ENCODE measurements at regions of chr2 and their contacts with region 1.

Region 1: GRCh38 chr2:176079831-176080539 is 3.8 kb downstream of the EVX2 start:
- DNase-seq: no peak
- H3K4me3 ChIP-seq: peak overlapping the region; percentile 12 to 33
- H3K27ac ChIP-seq: peak overlapping the region; percentile 77 to 82
- H3K4me1 ChIP-seq: no peaks in the 10 kb centered on the region
- H3K27me3 ChIP-seq: peaks cover 28% of the 10 kb centered on the region
- CTCF ChIP-seq: peak; percentile 64 to 94 (median 80)
- POLR2A ChIP-seq: no peak

Region 2: DNA sequence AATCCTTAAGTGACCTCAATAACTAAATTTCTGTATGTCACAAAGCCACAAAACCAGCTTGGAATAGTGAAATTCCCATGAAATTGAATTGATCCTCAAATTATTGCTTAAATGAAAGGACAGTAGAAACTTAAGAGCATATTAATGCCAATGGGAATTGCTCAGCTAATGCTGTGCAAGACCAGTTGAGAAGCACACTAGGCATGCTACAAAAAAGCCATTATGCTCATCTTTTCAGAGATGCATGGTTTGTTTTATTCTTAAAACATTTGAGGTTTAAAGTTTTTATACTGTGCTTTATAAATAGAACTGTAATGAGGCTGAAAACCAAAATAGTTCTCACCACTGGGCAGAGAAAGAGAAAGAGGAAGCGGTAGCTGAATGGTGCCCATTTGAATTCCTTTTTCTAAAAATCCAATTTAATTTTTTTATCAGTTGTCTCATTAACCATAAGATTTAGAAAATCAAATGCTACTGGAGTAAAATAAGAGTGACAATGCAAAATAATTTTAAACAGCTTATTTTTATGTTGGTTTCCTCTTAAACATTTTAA is 176.5 kb before region 1 on chr2:
- intact Hi-C with region 1: no loop called
- DNase-seq: no peak
- H3K4me3 ChIP-seq: no peak overlapping the region
- H3K27ac ChIP-seq: no peak overlapping the region
- H3K4me1 ChIP-seq: no peaks in the 10 kb centered on the region
- H3K27me3 ChIP-seq: no peaks in the 10 kb centered on the region
- CTCF ChIP-seq: no peak
- POLR2A ChIP-seq: no peak

Region 3: GRCh38 chr2:176001916-176002687 is 77.9 kb before region 1 on chr2 and contains the start of gene LNPK:
- intact Hi-C with region 1: loop called (anchors 5 kb)
- DNase-seq: peak; percentile 92
- H3K4me3 ChIP-seq: peak within 1 kb of the TSS; percentile 55 to 74
- H3K27ac ChIP-seq: peak within 1 kb of the TSS; percentile 73 to 82
- H3K4me1 ChIP-seq: peaks cover 8% of the 10 kb centered on the region
- H3K27me3 ChIP-seq: no peaks in the 10 kb centered on the region
- CTCF ChIP-seq: peak in 2 of 4 experiments; percentile 14 to 23
- POLR2A ChIP-seq: peak; percentile 92
- total RNA-seq, gene LNPK: 19.7 to 21.9 TPM

Region 4: GRCh38 chr2:176333685-176334084 is 253.7 kb after region 1 on chr2:
- intact Hi-C with region 1: no loop called
- DNase-seq: no peak
- H3K4me3 ChIP-seq: no peak overlapping the region
- H3K27ac ChIP-seq: no peak overlapping the region
- H3K4me1 ChIP-seq: peaks cover 4% of the 10 kb centered on the region
- H3K27me3 ChIP-seq: no peaks in the 10 kb centered on the region
- CTCF ChIP-seq: no peak
- POLR2A ChIP-seq: no peak